Common myeloid progenitor, CD34-positive (primary cell): ENCODE measurements at regions of chr1 and their contacts with region 1.

Region 1: DNA sequence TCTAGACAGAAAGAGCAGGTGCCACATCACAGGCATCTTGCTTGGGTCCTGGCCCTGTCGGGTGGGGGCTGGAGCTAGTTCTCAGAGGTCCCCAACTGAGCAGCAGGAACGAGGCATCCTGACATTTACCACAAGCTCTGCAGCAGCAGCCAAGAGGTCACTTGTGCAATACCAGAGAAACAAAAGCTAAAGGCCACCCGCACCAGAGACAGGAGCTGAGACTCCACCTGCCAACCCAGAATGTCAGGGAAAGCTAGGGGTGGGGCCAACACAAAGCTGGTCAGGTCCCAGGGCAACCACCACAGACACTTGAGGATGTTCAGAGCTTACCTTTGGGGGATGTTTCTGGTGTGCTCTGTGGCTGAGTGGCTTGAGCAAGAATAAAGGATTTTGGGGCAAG is 13.5 kb upstream of the SYT6 start:
- DNase-seq: no peak
- H3K4me3 ChIP-seq: no peak overlapping the region
- H3K27ac ChIP-seq: no peak overlapping the region
- H3K4me1 ChIP-seq: no peaks in the 10 kb centered on the region
- H3K27me3 ChIP-seq: peaks cover 0 to 7% (median 0%) of the 10 kb centered on the region in 5 experiments

Region 2: GRCh38 chr1:114043054-114043453 is 124.2 kb before region 1 on chr1:
- CTCF ChIA-PET with region 1: no interaction called
- POLR2A ChIA-PET with region 1: no interaction called
- DNase-seq: no peak
- H3K4me3 ChIP-seq: no peak overlapping the region
- H3K27ac ChIP-seq: no peak overlapping the region
- H3K4me1 ChIP-seq: peaks cover 0 to 4% (median 0%) of the 10 kb centered on the region in 4 experiments
- H3K27me3 ChIP-seq: peaks cover 0 to 2% (median 0%) of the 10 kb centered on the region in 5 experiments

Region 3: DNA sequence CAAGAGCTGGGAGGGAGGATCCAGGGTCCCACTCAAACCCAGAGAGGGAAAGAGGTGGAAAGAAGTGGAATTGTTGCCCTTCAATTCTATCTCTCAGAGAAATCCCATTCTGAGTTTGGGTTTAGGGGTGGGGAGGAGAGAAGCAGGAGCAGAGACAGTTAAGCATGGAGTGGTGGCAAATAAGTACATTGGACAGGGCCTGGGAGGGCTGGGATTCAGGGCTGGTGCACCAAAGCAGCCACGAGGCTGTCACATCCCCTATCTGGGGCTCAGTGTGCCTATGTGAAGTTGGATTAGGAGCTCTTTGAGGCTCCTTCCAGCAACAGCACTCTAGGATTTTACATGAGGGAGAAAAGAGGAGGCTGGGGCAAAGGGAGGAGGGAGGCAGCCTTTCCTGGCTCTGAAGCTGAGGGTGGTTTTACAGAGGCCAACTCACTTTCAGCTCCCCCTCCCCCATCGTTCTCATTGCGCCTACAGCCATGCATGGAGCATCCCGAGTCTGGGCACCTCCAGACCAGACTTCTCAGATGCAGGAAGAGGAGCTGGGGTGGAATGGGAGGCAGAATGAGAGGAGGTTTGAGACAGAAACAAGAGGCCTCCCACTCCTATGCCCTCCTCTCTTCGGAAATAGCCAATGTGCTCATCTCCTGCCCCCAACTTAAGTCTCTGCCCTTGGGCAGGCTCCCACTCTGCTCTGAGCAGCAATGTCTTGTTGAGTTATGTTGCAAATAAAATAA is 10.5 kb before region 1 on chr1:
- CTCF ChIA-PET with region 1: interaction called, 12 read pairs
- POLR2A ChIA-PET with region 1: no interaction called
- DNase-seq: no peak
- H3K4me3 ChIP-seq: no peak overlapping the region
- H3K27ac ChIP-seq: no peak overlapping the region
- H3K4me1 ChIP-seq: peaks cover 0 to 27% (median 23%) of the 10 kb centered on the region in 4 experiments
- H3K27me3 ChIP-seq: peaks cover 0 to 80% (median 48%) of the 10 kb centered on the region in 5 experiments